Testis (tissue), 5 donors: ENCODE measurements at regions of chr5 and their contacts with region 1.

Region 1: DNA sequence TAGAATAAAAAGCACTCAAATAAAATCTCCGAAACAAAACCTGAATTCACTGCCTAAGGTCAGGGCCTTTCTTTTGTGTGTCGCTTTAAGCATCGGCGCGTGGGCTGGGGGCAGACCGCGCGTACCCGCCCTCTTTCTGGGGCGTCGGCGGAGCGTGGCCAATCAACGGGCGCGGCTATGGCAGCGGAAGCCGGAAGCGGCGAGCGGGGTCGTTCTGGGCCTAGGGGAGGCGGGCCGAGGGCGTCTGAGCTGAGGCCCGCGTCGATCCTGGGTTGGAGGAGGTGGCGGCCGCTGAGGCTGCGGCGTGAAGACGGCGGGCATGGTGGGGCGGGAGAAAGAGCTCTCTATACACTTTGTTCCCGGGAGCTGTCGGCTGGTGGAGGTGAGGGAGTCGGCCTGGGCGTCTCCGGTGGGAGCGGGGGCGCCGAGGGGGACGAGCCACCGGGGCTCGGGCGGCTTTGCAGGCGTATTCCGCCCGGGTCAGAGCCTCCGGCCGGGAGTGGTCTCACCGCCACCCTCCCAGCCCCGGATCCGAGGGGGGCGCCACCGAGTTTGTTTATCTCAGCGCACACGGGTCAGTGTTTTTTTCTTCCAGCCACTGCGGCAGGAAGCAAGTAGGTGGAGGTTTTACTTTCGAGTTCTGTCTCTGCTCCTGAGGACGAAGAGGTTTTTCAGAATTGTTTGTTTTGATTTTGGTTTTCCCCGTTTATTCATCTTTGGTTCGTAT is at the start of gene MAT2B:
- DNase-seq: peak; percentile 97
- H3K4me3 ChIP-seq: peak within 1 kb of the TSS; percentile 84 to 85
- H3K27ac ChIP-seq: peak within 1 kb of the TSS; percentile 94 to 98
- H3K4me1 ChIP-seq: peaks cover 29% of the 10 kb centered on the region
- H3K27me3 ChIP-seq: no peaks in the 10 kb centered on the region
- CTCF ChIP-seq: peak in 1 of 3 experiments; percentile 11
- POLR2A ChIP-seq: peak; percentile 27
- total RNA-seq, gene MAT2B: 43.8 to 54.8 TPM

Region 2: DNA sequence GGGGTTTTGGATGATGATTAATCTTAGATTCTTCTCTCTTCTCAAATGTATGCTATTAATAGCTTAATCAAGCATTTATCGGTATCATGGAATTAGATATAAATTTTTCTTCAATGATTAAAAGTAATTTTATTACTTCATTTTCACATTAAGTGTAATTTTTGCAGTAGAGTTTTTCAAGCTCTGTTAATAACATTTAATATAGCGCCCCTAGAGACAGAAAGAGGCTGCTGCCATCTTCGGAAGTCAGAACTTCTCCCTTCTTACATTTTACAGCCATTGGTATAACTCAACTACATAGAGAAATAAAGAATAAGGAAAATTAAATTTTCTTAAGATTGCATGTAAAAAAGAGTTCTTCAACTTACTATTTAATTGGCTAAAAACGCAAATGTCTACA is 897.7 kb before region 1 on chr5:
- intact Hi-C with region 1: no loop called
- DNase-seq: no peak
- H3K4me3 ChIP-seq: no peak overlapping the region
- H3K27ac ChIP-seq: no peak overlapping the region
- H3K4me1 ChIP-seq: no peaks in the 10 kb centered on the region
- H3K27me3 ChIP-seq: no peaks in the 10 kb centered on the region
- CTCF ChIP-seq: no peak
- POLR2A ChIP-seq: no peak

Region 3: GRCh38 chr5:163459922-163460766 is 45.4 kb before region 1 on chr5 and contains the starts of genes HMMR and NUDCD2:
- intact Hi-C with region 1: loop called (anchors 10 kb)
- DNase-seq: peak; percentile 98
- H3K4me3 ChIP-seq: peak within 1 kb of the TSS; percentile 63 to 75
- H3K27ac ChIP-seq: peak within 1 kb of the TSS; percentile 92 to 96
- H3K4me1 ChIP-seq: peaks cover 9% of the 10 kb centered on the region
- H3K27me3 ChIP-seq: no peaks in the 10 kb centered on the region
- CTCF ChIP-seq: no peak
- POLR2A ChIP-seq: no peak
- total RNA-seq, gene HMMR: 11.5 to 20.9 TPM
- total RNA-seq, gene NUDCD2: 11.4 to 12.9 TPM